Activated CD4-positive, alpha-beta T cell treated with anti-CD3 and anti-CD28 coated beads for 36 hours (primary cell): ENCODE measurements at regions of chr9 and their contacts with region 1.

Region 1: GRCh38 chr9:38423973-38424843 is at the start of gene IGFBPL1:
- DNase-seq: peak; percentile 44
- ATAC-seq: peak; percentile 87
- H3K4me3 Mint-ChIP-seq: no peak within 1 kb of the TSS
- H3K27ac Mint-ChIP-seq: no peak within 1 kb of the TSS
- H3K4me1 Mint-ChIP-seq: peaks cover 2% of the 10 kb centered on the region
- H3K27me3 Mint-ChIP-seq: peaks cover 35% of the 10 kb centered on the region
- total RNA-seq, gene IGFBPL1: 0.21 TPM in 1 of 2 experiments, not detected in the other

Region 2: GRCh38 chr9:38339087-38339486 is 85.1 kb before region 1 on chr9:
- CTCF ChIA-PET with region 1: no interaction called
- POLR2A ChIA-PET with region 1: no interaction called
- intact Hi-C with region 1: no loop called
- DNase-seq: no peak
- ATAC-seq: peak; percentile 55
- H3K4me3 Mint-ChIP-seq: no peak overlapping the region
- H3K27ac Mint-ChIP-seq: no peak overlapping the region
- H3K4me1 Mint-ChIP-seq: no peaks in the 10 kb centered on the region
- H3K27me3 Mint-ChIP-seq: no peaks in the 10 kb centered on the region

Region 3: DNA sequence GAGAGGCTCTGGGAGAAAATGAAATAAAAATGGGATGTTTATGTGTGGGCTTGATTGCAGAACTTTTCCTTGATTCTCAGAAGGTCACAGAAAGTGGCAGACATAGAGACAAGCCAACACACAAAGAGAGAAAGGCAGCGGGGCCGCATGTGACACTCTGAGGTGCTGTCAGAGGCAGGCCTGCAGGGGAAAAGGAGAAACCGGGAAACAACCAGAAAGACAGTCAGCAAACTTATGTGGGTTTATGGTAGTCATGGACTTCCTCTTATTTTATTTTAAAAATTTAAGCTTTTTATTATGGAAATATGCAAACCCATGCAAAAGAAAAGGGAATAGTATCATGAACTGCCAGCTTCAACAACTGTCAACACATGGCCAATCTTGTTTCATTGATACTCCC is 16.3 kb after region 1 on chr9:
- CTCF ChIA-PET with region 1: no interaction called
- POLR2A ChIA-PET with region 1: no interaction called
- intact Hi-C with region 1: loop called in 1 of 2 experiments (anchors 1 kb)
- DNase-seq: no peak
- ATAC-seq: no peak
- H3K4me3 Mint-ChIP-seq: no peak overlapping the region
- H3K27ac Mint-ChIP-seq: no peak overlapping the region
- H3K4me1 Mint-ChIP-seq: peaks cover under 1% of the 10 kb centered on the region
- H3K27me3 Mint-ChIP-seq: peaks cover 7% of the 10 kb centered on the region

Region 4: DNA sequence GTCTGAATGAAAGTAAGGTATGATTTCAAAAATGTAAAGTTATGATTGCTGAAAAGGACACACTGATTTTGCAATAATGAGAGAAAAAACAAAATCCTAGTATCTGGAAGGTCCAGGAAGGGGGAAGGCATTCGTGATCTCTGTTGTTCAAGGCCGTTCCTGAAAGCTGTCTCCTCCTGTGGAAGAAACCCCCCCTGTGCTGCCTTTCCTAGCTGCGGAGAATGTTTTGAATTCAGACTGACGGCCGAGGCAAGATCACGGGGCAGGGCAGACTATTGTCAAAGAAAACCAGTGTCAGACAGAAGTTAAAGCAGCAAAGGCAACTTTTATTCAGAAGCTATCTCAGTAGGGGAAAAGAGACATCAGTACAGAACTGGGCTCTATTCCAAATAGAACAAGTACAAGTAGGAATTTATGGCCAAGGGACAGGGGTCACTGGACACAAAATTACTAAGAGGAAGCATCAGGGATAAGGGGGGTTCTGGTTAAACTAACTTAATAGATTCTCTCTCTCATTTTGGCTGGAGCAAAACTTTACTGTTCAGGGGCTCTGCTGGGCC is 61.9 kb after region 1 on chr9:
- CTCF ChIA-PET with region 1: no interaction called
- POLR2A ChIA-PET with region 1: no interaction called
- intact Hi-C with region 1: no loop called
- DNase-seq: no peak
- ATAC-seq: no peak
- H3K4me3 Mint-ChIP-seq: no peak overlapping the region
- H3K27ac Mint-ChIP-seq: no peak overlapping the region
- H3K4me1 Mint-ChIP-seq: no peaks in the 10 kb centered on the region
- H3K27me3 Mint-ChIP-seq: peaks cover 4% of the 10 kb centered on the region